ENCODE measurements at regions of chr17 and their contacts with region 1.

Region 1: GRCh38 chr17:77772461-77772897 is 186.0 kb upstream of the TNRC6C start:
- DNase-seq: peak; percentile 85

Region 2: DNA sequence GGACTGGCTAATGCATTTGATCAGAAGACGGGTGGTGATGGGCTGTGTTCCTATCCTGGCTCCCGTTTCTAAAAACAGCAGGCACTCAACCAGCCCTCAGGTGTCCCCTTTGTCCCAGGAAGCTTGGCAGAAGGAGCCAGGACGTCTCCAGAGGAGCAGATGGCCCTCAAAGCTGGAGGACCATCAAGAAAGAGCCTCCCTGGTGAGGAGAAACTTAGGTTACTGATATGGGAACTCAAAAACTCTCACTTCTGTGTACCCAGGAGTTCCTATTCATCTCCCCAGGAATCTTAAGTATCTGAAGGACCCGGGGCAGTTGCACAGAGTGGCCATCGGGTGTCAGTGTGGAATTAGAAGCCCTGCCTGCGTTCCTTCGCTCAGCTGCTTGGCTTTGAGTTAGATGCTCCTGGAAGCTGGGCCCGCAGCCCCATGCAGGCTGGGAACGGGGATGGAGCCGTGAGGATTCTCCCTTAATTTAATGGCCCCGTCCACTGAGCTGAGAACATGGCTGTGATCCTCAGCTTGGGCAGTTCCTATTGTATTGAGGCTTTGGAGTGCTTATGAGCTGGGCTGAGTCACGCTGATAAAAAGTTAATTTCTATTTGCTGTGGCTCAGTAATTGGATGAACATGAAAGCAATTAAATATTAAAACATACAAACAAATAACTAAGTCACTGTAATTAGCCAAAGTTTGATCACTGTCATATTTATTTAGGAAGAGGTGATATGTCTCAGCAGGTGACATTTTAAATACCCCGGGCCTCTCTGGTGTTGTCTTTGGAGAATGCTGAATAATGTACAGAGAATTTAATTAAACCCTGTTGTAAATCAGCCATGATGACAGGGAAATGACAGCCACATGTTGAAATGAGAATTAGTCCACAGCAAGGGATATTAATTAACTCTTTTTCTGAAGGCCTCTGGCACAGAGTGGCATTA is 229.7 kb before region 1 on chr17:
- intact Hi-C with region 1: loop called (anchors 5 kb)
- DNase-seq: peak; percentile 84

Region 3: DNA sequence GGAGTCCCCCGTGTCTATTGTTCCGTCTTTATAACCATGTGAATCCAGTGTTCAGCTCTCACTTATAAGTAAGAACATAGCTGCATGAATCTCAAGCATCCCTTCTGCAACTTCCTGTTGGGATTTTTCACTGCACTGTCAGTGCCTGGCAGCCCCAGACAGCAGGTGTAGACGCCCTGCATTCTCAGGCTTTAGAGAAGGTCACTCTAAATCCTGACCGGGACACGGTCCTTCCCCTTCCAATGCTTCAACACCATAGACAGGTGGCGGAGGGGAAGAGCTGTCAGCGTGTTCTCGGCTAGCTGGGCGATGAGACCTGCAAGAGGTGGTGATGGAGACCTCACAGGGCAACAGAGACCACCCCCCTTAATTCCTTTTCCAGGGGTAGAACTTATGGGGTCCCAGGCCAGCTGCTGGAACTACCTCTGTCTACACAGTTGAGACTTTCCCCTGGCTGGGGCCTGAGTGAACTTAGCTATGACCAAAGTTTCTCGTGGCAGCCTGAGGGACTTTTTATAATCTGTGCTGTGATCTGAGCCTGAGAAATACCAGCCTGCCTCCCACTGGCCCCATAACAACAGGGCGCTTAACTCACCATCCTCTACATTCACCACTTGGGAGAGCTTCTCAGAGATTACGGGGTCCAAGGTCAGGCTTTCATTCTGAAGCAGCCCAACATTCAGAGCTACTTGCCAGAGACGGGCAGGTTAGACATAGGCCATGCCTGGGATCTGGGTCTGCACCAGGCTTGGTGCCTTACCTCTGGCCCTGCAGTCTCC is 42.8 kb after region 1 on chr17:
- intact Hi-C with region 1: loop called (anchors 5 kb)
- DNase-seq: peak; percentile 49

Region 4: DNA sequence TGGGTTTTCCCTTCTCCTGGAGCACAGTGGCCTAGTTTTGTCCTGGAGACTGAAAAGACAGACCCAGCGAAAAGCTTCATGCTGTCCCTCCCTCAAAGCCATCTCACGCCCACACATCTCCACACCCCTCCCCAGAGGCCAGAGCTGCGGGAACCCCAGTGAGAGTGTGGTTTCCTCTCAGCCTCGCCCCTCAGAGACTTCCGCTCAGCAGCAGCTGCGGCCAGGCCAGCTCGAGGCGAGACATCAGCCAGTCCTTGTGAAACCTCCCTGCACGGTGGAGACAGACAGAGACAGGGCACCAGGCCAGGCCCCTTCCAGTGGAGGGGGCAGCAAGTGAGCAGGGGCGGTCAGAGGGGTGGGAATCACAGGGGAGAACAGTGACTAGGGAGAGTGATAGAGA is 109.1 kb after region 1 on chr17:
- intact Hi-C with region 1: loop called (anchors 5 kb)
- DNase-seq: peak; percentile 96

Region 5: DNA sequence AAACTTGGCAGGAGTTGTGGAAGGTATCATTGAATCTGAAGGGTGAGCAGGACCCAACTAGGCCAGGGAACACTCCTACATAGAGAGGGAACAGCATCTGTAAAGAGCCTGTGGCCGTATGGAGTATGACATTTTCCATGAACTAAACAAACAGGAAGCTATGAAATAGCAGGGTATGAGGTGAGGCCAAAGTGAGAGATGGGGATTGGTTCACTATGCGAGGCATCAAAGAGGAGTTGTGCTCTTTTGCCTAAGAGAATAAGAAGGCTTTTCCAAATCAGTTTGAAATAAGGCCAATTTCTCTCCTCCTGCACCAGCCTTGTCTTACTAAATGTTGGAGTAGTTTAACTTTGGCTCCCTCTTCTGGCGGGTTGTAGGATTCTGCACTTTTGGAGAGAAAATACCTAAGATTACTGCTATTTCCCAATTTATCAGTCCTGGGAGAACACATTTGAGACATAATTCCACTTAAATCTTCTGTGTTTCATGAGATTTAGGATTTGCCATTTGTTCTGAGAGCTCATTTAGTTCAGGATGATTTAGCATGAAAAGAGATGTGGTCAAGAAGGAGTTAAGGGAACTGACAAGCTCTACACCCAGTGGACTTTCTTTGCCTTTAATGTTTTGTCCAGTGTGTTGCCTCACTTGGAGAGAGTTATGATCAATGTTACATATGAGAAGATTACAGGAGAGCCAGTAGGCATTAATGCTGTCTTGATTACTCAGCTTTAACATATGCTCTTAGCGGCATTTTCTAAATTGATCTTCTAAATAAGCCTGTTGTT is 241.4 kb after region 1 on chr17:
- intact Hi-C with region 1: loop called (anchors 2 kb)
- DNase-seq: no peak